ENCODE measurements at regions of chr7 and their contacts with region 1.

Region 1: DNA sequence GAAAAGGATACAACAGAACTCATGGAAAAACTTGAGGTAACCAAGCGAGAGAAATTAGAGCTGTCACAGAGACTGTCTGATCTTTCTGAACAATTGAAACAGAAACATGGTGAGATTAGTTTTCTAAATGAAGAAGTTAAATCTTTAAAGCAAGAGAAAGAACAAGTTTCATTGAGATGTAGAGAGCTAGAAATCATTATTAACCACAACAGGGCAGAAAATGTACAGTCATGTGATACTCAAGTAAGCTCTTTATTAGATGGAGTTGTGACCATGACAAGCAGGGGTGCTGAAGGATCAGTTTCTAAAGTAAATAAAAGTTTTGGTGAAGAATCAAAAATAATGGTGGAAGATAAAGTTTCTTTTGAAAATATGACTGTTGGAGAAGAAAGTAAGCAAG is 62.1 kb downstream of the AKAP9 start:
- DNase-seq: no peak
- ATAC-seq: no peak
- H3K4me3 ChIP-seq: no peak overlapping the region
- H3K27ac ChIP-seq: no peak overlapping the region
- H3K4me1 ChIP-seq: no peaks in the 10 kb centered on the region
- H3K27me3 ChIP-seq: no peaks in the 10 kb centered on the region
- CTCF ChIP-seq: no peak
- POLR2A ChIP-seq: no peak
- RAD21 ChIP-seq: no peak

Region 2: GRCh38 chr7:91973639-91974038 is 29.1 kb before region 1 on chr7:
- CTCF ChIA-PET with region 1: interaction called, 3 read pairs
- POLR2A ChIA-PET with region 1: no interaction called
- dilution Hi-C with region 1: no loop called
- in situ Hi-C with region 1: no loop called
- intact Hi-C with region 1: loop called (anchors 1 kb)
- DNase-seq: no peak
- ATAC-seq: no peak
- H3K4me3 ChIP-seq: no peak overlapping the region
- H3K27ac ChIP-seq: no peak overlapping the region
- H3K4me1 ChIP-seq: no peaks in the 10 kb centered on the region
- H3K27me3 ChIP-seq: no peaks in the 10 kb centered on the region
- CTCF ChIP-seq: no peak
- POLR2A ChIP-seq: no peak
- RAD21 ChIP-seq: no peak

Region 3: GRCh38 chr7:92161271-92161670 is 158.6 kb after region 1 on chr7:
- CTCF ChIA-PET with region 1: no interaction called
- POLR2A ChIA-PET with region 1: no interaction called
- dilution Hi-C with region 1: no loop called
- in situ Hi-C with region 1: no loop called
- intact Hi-C with region 1: no loop called
- DNase-seq: no peak
- ATAC-seq: no peak
- H3K4me3 ChIP-seq: no peak overlapping the region
- H3K27ac ChIP-seq: no peak overlapping the region
- H3K4me1 ChIP-seq: peaks cover 6% of the 10 kb centered on the region; the same call in 1 of the 2 replicates
- H3K27me3 ChIP-seq: no peaks in the 10 kb centered on the region
- CTCF ChIP-seq: no peak
- POLR2A ChIP-seq: no peak
- RAD21 ChIP-seq: no peak